Posterior vena cava (tissue), 2 donors: ENCODE measurements at regions of chr6 and their contacts with region 1.

Region 1: GRCh38 chr6:170344631-170345575 is 38.3 kb downstream of the FAM120B start:
- DNase-seq: no peak

Region 2: DNA sequence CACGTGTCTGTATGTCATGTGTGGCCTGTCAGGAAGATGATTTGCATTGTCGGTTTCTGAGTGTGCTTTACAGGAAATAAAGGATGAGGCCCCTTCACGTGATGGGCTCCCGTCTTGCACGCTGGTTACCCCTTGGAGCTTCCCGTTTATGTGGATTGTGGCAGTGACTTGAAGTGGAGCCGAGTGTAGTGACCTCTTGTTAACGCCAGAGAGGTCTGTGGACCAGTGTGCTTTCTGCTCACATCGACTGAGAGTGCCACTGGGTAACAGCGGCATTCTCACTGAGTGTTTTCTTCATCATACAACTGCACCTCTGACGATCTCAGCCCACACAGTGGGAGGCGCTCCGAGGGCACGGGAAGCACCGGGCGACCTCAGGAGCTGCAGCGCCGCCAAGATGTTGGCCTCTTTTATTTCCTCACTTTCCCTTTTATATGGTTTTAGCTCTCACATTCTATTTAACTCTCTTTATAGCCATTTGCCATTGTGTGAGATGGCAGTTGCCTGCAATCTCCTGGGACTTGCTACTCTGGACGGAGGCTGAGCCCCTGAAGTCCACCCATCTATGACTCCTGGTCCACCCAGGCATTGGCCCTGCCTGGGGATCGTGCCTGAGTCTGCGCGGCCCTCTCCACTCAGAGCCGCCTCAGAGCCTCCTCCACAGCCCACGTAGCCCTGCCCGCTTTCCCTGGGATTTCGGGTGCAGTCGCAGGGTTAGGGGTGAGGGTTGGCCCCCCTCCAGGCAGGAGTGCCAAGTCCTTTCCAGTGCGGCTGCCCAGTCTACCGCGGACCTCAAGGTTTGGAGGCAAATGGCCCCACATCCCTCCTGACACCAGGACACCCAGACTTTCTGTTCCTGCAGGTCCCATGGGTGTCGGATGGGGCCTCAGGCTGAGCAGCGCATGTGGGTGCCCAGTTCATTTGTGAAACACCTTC is 354.5 kb before region 1 on chr6:
- intact Hi-C with region 1: no loop called
- DNase-seq: no peak

Region 3: DNA sequence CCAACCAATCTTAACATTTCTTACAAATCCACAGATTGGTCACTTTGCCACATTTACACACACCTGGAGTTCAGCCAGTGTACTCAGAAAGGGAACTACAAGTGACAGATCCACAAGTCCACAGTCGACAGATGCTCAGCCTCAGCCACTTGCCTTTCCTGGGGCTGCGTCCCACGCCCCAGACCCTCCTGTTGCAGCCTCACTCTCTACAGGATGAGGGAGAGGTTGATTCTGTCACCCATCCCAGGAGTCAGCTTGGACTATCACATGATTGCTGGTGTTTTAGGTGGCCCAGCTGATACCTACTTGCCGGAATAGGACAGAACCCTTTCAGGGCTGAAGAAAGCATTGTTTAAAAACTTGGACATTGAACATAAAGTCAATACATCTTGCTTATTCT is 70.4 kb after region 1 on chr6:
- intact Hi-C with region 1: loop called in 1 of 2 experiments (anchors 2 kb)
- DNase-seq: no peak